HepG2 (cell line): ENCODE measurements at regions of chr3 and their contacts with region 1.

Region 1: GRCh38 chr3:36540888-36541518 is 160.7 kb downstream of the STAC start:
- DNase-seq: peak; percentile 4
- ATAC-seq: peak; percentile 69
- H3K4me3 ChIP-seq: no peak overlapping the region
- H3K27ac ChIP-seq: no peak overlapping the region
- H3K4me1 ChIP-seq: no peaks in the 10 kb centered on the region
- H3K27me3 ChIP-seq: no peaks in the 10 kb centered on the region; a peak in 1 of 5 replicates
- CTCF ChIP-seq: peak; percentile 52
- EP300 ChIP-seq: no peak
- POLR2A ChIP-seq: no peak
- RAD21 ChIP-seq: no peak

Region 2: DNA sequence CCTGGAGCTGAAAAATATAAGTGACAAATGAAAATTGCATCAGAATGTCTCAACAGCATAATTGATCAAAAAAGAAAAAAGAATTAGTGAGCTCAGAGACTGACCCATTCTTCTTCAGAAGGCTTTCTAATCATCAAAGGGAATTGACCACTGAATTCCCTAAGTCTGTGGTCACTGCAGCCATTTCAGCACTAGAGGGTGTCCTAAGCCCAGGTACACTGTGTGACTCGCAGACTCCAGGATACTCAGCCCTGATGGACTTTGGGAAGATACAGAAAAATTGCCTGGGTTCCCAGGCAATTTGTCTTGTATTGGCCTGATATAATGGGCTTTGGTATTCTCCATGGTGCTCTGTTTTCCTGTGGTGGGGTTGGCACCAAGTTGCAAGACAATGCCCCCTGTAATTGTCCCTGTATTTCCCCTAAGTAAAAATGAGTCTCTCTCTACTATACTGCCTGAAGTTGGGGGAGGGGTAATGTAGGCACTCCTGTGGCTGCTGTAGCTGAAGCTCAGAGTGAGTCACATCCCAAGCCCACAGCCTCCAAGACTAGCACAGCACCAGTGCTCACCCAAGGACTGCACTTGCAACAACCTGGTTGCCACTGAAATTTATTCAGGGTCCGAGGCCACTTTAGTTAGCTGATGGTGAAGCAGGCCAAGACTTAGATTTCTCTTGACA is 416.7 kb before region 1 on chr3:
- CTCF ChIA-PET with region 1: interaction called, 6 read pairs
- POLR2A ChIA-PET with region 1: no interaction called
- in situ Hi-C with region 1: loop called (anchors 25 kb)
- intact Hi-C with region 1: loop called (anchors 1 kb)
- DNase-seq: peak; percentile 38
- ATAC-seq: peak; percentile 92
- H3K4me3 ChIP-seq: no peak overlapping the region
- H3K27ac ChIP-seq: no peak overlapping the region
- H3K4me1 ChIP-seq: no peaks in the 10 kb centered on the region
- H3K27me3 ChIP-seq: no peaks in the 10 kb centered on the region
- CTCF ChIP-seq: peak; percentile 59
- EP300 ChIP-seq: no peak
- POLR2A ChIP-seq: no peak
- RAD21 ChIP-seq: peak; percentile 31; the same call in 1 of the 2 replicates

Region 3: GRCh38 chr3:36132214-36132613 is 408.8 kb before region 1 on chr3:
- CTCF ChIA-PET with region 1: no interaction called
- POLR2A ChIA-PET with region 1: no interaction called
- in situ Hi-C with region 1: loop called (anchors 25 kb)
- intact Hi-C with region 1: no loop called
- DNase-seq: no peak
- ATAC-seq: no peak
- H3K4me3 ChIP-seq: no peak overlapping the region
- H3K27ac ChIP-seq: no peak overlapping the region
- H3K4me1 ChIP-seq: no peaks in the 10 kb centered on the region
- H3K27me3 ChIP-seq: no peaks in the 10 kb centered on the region
- CTCF ChIP-seq: no peak
- EP300 ChIP-seq: no peak
- POLR2A ChIP-seq: no peak
- RAD21 ChIP-seq: no peak

Region 4: GRCh38 chr3:36408146-36408545 is 132.9 kb before region 1 on chr3:
- CTCF ChIA-PET with region 1: no interaction called
- POLR2A ChIA-PET with region 1: no interaction called
- in situ Hi-C with region 1: no loop called
- intact Hi-C with region 1: loop called (anchors 2 kb)
- DNase-seq: peak; percentile 1
- ATAC-seq: no peak; the same call in 2 of the 3 replicates
- H3K4me3 ChIP-seq: no peak overlapping the region
- H3K27ac ChIP-seq: no peak overlapping the region
- H3K4me1 ChIP-seq: no peaks in the 10 kb centered on the region
- H3K27me3 ChIP-seq: no peaks in the 10 kb centered on the region
- CTCF ChIP-seq: no peak
- EP300 ChIP-seq: no peak
- POLR2A ChIP-seq: no peak
- RAD21 ChIP-seq: no peak